Sigmoid colon (tissue), 7 donors: ENCODE measurements at regions of chr2 and their contacts with region 1.

Region 1: GRCh38 chr2:67215214-67216055 is 181.7 kb upstream of the ETAA1 start:
- DNase-seq: peak; percentile 89
- H3K4me3 ChIP-seq: peak overlapping the region in 1 of 4 donors; percentile 17
- H3K27ac ChIP-seq: peak overlapping the region; percentile 65 to 83 (median 74)
- H3K4me1 ChIP-seq: peaks cover 0 to 52% (median 27%) of the 10 kb centered on the region in 4 donors
- H3K27me3 ChIP-seq: no peaks in the 10 kb centered on the region
- CTCF ChIP-seq: peak; percentile 27 to 51 (median 45)
- EP300 ChIP-seq: no peak
- POLR2A ChIP-seq: no peak

Region 2: GRCh38 chr2:66581339-66582103 is 633.9 kb before region 1 on chr2:
- intact Hi-C with region 1: loop called (anchors 2 kb)
- DNase-seq: peak; percentile 89
- H3K4me3 ChIP-seq: peak overlapping the region; percentile 43 to 73 (median 57)
- H3K27ac ChIP-seq: peak overlapping the region; percentile 95 to 99 (median 98)
- H3K4me1 ChIP-seq: peaks cover 0 to 35% (median 22%) of the 10 kb centered on the region in 4 donors
- H3K27me3 ChIP-seq: peaks cover 0 to 3% (median 3%) of the 10 kb centered on the region in 3 donors
- CTCF ChIP-seq: no peak
- EP300 ChIP-seq: no peak
- POLR2A ChIP-seq: peak; percentile 25 to 39

Region 3: GRCh38 chr2:66748939-66749338 is 466.5 kb before region 1 on chr2:
- intact Hi-C with region 1: loop called (anchors 5 kb)
- DNase-seq: no peak
- H3K4me3 ChIP-seq: no peak overlapping the region
- H3K27ac ChIP-seq: peak overlapping the region in 3 of 4 donors; percentile 62 to 80 (median 69)
- H3K4me1 ChIP-seq: peaks cover 0 to 56% (median 27%) of the 10 kb centered on the region in 4 donors
- H3K27me3 ChIP-seq: no peaks in the 10 kb centered on the region
- CTCF ChIP-seq: no peak
- EP300 ChIP-seq: no peak
- POLR2A ChIP-seq: no peak

Region 4: DNA sequence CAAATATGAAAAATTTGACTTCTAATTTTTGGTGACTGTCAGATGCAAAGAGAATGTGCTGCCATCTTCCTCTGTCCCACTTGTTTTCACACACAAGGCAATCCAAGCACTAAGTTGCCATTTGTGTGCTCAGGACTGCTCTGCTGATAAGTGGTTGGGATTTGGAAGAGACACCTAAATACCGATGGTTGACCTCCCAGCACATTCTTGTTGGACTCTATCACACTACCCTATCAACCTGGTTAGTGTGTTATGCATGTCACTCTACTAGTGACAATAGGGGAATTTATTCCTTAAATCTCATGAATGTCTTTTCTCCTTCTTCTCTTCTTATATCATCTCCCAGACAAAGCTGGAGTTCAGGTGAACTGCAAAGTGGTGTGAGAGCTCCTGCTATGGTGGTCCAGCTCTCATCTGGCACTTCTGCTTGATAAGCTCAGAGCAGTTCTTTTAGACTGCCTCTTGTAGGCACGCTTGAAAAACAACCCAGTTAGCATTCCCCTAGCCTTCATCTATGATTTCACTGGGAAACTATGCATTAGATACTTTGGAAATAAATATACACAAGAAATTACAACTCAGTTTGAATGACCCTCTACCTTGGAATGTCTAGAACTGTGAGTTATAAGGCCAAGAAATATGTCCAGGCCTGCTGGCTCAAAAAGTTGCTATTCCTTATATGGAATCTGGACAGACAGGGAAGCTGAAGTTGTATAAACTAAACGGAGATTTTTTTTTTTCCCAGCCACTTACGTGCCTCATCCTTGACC is 375.7 kb before region 1 on chr2:
- intact Hi-C with region 1: no loop called
- DNase-seq: no peak
- H3K4me3 ChIP-seq: peak overlapping the region in 1 of 4 donors; percentile 13
- H3K27ac ChIP-seq: peak overlapping the region; percentile 68 to 84 (median 74)
- H3K4me1 ChIP-seq: peaks cover 0 to 36% (median 23%) of the 10 kb centered on the region in 4 donors
- H3K27me3 ChIP-seq: no peaks in the 10 kb centered on the region
- CTCF ChIP-seq: no peak
- EP300 ChIP-seq: peak; percentile 6 to 69 (median 43)
- POLR2A ChIP-seq: no peak

Region 5: GRCh38 chr2:66994654-66995053 is 220.8 kb before region 1 on chr2:
- intact Hi-C with region 1: loop called (anchors 5 kb)
- DNase-seq: no peak
- H3K4me3 ChIP-seq: no peak overlapping the region
- H3K27ac ChIP-seq: peak overlapping the region in 3 of 4 donors; percentile 67 to 78 (median 77)
- H3K4me1 ChIP-seq: peaks cover 0 to 43% (median 19%) of the 10 kb centered on the region in 4 donors
- H3K27me3 ChIP-seq: no peaks in the 10 kb centered on the region
- CTCF ChIP-seq: no peak
- EP300 ChIP-seq: no peak
- POLR2A ChIP-seq: no peak

Region 6: GRCh38 chr2:67145851-67146250 is 69.6 kb before region 1 on chr2:
- intact Hi-C with region 1: no loop called
- DNase-seq: no peak
- H3K4me3 ChIP-seq: no peak overlapping the region
- H3K27ac ChIP-seq: no peak overlapping the region
- H3K4me1 ChIP-seq: no peaks in the 10 kb centered on the region
- H3K27me3 ChIP-seq: no peaks in the 10 kb centered on the region
- CTCF ChIP-seq: no peak
- EP300 ChIP-seq: no peak
- POLR2A ChIP-seq: no peak

Region 7: DNA sequence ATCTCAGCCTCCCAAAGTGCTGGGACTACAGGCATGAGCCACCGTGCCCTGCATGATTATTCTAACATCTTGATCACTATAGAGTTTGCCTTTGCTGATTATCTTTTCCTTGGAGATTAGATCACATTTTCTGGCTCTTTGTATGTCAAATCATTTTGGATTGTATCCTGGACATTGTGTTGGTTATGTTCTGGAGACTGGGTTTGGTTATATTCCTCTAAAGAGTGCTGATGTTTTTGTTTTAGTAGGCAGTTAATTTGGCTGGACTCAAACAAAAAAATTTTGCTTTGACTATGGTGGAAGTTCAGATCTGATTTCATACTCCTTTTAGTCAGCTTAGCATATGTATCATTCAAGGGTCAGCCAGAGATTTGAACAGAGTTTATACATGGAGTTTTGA is 208.1 kb after region 1 on chr2:
- intact Hi-C with region 1: no loop called
- DNase-seq: no peak
- H3K4me3 ChIP-seq: no peak overlapping the region
- H3K27ac ChIP-seq: no peak overlapping the region
- H3K4me1 ChIP-seq: no peaks in the 10 kb centered on the region
- H3K27me3 ChIP-seq: no peaks in the 10 kb centered on the region
- CTCF ChIP-seq: no peak
- EP300 ChIP-seq: no peak
- POLR2A ChIP-seq: no peak